Prostate gland (tissue), 2 donors: ENCODE measurements at regions of chr2 and their contacts with region 1.

Region 1: DNA sequence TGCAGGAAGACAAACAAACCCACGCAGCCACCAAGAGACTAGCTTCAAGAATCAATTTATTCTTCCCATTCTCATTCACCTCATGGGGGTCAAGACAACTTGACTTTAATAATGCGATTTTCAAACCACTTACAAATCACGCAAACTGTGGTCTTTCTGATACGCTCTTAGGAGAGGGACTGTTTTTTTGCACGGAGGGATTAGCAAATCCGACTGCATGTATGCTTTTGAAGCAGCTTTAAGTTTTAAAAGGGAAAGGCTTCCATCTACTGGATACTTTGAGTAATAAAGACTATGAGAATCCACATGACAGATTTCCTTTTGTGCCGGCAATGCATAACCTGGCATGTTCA is 322.9 kb upstream of the KCNJ3 start:
- DNase-seq: no peak
- H3K4me3 ChIP-seq: no peak overlapping the region
- H3K27ac ChIP-seq: no peak overlapping the region
- H3K4me1 ChIP-seq: no peaks in the 10 kb centered on the region
- H3K27me3 ChIP-seq: no peaks in the 10 kb centered on the region
- CTCF ChIP-seq: peak in 1 of 4 experiments; percentile 24
- POLR2A ChIP-seq: no peak

Region 2: GRCh38 chr2:153871231-153872221 is 504.0 kb before region 1 on chr2 and contains the start of gene GALNT13:
- intact Hi-C with region 1: loop called (anchors 10 kb)
- DNase-seq: no peak
- H3K4me3 ChIP-seq: peak within 1 kb of the TSS in 1 of 2 donors; percentile 10
- H3K27ac ChIP-seq: no peak within 1 kb of the TSS
- H3K4me1 ChIP-seq: no peaks in the 10 kb centered on the region
- H3K27me3 ChIP-seq: peaks cover 14% of the 10 kb centered on the region
- CTCF ChIP-seq: no peak
- POLR2A ChIP-seq: no peak
- total RNA-seq, gene GALNT13: 0.87 to 1.1 TPM

Region 3: DNA sequence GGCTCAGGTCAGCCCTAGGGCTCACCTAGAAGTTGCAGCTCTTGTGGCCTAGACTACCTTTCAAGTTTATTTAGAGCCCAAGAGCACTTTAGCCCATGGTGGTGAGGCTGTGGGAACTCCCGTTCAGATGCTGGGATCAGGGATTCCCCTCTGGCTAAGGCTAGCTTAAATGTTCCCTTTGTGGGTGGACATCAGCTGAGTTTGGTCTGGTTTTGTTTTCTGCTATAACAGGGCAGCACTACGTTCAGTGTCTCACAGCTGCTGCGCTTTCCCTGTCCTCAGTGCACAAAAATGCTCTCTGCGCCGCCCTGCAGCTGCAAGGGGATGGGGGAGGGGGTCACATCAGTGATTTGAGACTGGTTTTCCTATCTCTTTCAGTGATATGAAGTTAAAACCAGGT is 152.4 kb after region 1 on chr2:
- intact Hi-C with region 1: no loop called
- DNase-seq: no peak
- H3K4me3 ChIP-seq: no peak overlapping the region
- H3K27ac ChIP-seq: no peak overlapping the region
- H3K4me1 ChIP-seq: no peaks in the 10 kb centered on the region
- H3K27me3 ChIP-seq: no peaks in the 10 kb centered on the region
- CTCF ChIP-seq: no peak
- POLR2A ChIP-seq: no peak